Caco-2 (cell line): ENCODE measurements at regions of chr7 and their contacts with region 1.

Region 1: GRCh38 chr7:55018361-55019190 is at the start of gene EGFR:
- DNase-seq: peak; percentile 79 to 83
- H3K4me3 ChIP-seq: peak within 1 kb of the TSS; percentile 86
- H3K4me3 Mint-ChIP-seq: peak within 1 kb of the TSS; percentile 81
- H3K27ac Mint-ChIP-seq: peak within 1 kb of the TSS; percentile 59
- H3K4me1 ChIP-seq: peaks cover 32% of the 10 kb centered on the region
- H3K4me1 Mint-ChIP-seq: peaks cover 16% of the 10 kb centered on the region
- H3K27me3 ChIP-seq: no peaks in the 10 kb centered on the region
- H3K27me3 Mint-ChIP-seq: no peaks in the 10 kb centered on the region
- CTCF ChIP-seq: no peak
- total RNA-seq, gene EGFR: 55.1 and 60.1 TPM in 2 replicates

Region 2: GRCh38 chr7:54877683-54878082 is 140.9 kb before region 1 on chr7:
- CTCF ChIA-PET with region 1: interaction called, 6 read pairs
- POLR2A ChIA-PET with region 1: interaction called, 4 read pairs
- intact Hi-C with region 1: loop called (anchors 2 kb)
- DNase-seq: peak in 1 of 2 experiments; percentile 36
- H3K4me3 ChIP-seq: no peak overlapping the region
- H3K4me3 Mint-ChIP-seq: no peak overlapping the region
- H3K27ac Mint-ChIP-seq: peak overlapping the region; percentile 8
- H3K4me1 ChIP-seq: peaks cover 44% of the 10 kb centered on the region
- H3K4me1 Mint-ChIP-seq: peaks cover 30% of the 10 kb centered on the region
- H3K27me3 ChIP-seq: no peaks in the 10 kb centered on the region
- H3K27me3 Mint-ChIP-seq: no peaks in the 10 kb centered on the region
- CTCF ChIP-seq: peak in 1 of 2 experiments; percentile 37

Region 3: GRCh38 chr7:54985405-54986330 is 32.9 kb before region 1 on chr7:
- CTCF ChIA-PET with region 1: no interaction called
- POLR2A ChIA-PET with region 1: interaction called, 4 read pairs
- intact Hi-C with region 1: loop called (anchors 1 kb)
- DNase-seq: peak; percentile 36 to 53
- H3K4me3 ChIP-seq: no peak overlapping the region
- H3K4me3 Mint-ChIP-seq: peak overlapping the region; percentile 28
- H3K27ac Mint-ChIP-seq: peak overlapping the region; percentile 65
- H3K4me1 ChIP-seq: peaks cover 26% of the 10 kb centered on the region
- H3K4me1 Mint-ChIP-seq: peaks cover 21% of the 10 kb centered on the region
- H3K27me3 ChIP-seq: no peaks in the 10 kb centered on the region
- H3K27me3 Mint-ChIP-seq: no peaks in the 10 kb centered on the region
- CTCF ChIP-seq: no peak